GM18951 (cell line): ENCODE measurements at regions of chr11 and their contacts with region 1.

Region 1: DNA sequence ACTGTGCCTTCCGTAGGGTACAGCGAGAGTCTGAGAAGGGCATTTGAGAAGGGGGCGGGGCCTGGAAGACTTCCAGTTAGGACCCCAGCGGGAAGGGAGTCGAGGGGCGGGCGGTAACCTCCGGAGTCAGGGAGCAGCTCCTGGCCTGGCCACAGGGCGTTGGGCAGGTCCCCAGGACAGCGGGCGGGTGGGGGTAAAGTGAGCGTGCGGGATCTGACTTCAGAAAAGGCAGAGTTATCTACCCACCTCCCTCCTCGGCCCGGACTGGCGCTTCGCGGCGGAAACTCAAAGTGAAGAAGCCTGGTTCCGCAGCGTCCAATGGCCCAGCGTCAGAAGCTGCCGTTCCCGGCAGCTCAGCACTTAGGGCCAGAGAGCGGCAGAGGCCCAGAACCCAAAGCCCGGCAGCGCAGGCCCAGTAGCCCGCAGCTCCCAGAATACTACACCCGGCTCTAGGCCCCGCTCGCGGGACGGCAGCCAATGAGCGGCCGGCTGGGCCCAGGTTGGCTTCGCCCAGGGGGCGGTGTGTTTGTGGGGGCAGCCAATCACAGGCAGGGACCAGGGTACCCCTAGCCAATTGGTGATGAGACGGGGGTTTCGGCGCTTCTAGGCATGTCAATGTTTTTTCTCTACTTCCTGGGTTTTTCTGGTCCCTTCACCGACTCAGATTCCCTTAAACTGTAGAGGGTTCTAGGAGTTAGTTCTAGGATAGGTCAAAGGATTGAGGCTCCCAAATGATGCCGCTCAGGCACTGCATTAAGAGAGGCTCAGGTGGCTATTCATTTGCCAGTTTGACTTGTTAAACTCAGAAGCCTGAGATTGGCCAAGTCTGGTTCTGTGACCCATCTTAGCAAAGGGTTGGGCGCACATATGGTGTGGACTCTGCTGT is at the start of gene TRIM68:
- POLR2A ChIP-seq: peak; percentile 79

Region 2: GRCh38 chr11:5171856-5172255 is 563.8 kb after region 1 on chr11:
- in situ Hi-C with region 1: no loop called
- POLR2A ChIP-seq: no peak

Region 3: DNA sequence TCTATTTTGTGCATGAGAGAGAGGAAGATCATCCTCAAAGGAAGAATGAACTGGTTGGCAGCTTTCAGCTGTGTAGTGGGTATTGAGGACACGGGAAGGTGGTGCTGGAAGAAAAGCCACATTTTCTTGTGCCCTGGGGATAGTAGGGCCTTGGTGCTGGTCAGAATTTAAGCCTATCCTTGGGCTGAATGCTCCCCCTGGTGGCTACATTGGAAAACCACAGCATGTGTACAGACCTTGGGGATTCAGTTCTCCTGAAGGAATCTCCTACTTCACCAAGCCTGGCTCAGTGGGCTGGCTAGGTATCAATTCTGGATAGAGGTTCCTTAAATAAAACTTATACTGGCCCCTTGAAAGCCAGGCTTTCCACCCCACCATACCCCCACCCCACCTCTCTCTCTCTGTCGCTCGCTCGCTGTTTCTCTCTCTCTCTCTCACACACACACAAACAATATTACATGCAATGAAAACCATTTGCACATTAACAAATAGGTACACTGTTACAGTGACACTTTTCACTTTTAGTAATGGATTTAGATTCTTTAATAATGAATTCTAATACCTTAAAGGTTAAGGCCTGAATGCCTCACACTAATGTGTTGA is 772.8 kb after region 1 on chr11:
- in situ Hi-C with region 1: loop called (anchors 25 kb)
- POLR2A ChIP-seq: no peak

Region 4: GRCh38 chr11:5420993-5421392 is 813.0 kb after region 1 on chr11:
- in situ Hi-C with region 1: no loop called
- POLR2A ChIP-seq: no peak